ENCODE measurements at regions of chr3 and their contacts with region 1.

Region 1: GRCh38 chr3:156674046-156674910 is at the start of gene TIPARP:
- DNase-seq: peak; percentile 100
- H3K4me3 Mint-ChIP-seq: peak within 1 kb of the TSS; percentile 86
- H3K27ac Mint-ChIP-seq: peak within 1 kb of the TSS; percentile 89
- H3K4me1 Mint-ChIP-seq: peaks cover 40% of the 10 kb centered on the region
- H3K27me3 Mint-ChIP-seq: no peaks in the 10 kb centered on the region
- total RNA-seq, gene TIPARP: 22.1 and 22.8 TPM in 2 replicates

Region 2: GRCh38 chr3:156605686-156606605 is 68.3 kb before region 1 on chr3:
- intact Hi-C with region 1: loop called (anchors 2 kb)
- DNase-seq: no peak
- H3K4me3 Mint-ChIP-seq: peak overlapping the region; percentile 73
- H3K27ac Mint-ChIP-seq: no peak overlapping the region
- H3K4me1 Mint-ChIP-seq: peaks cover 41% of the 10 kb centered on the region
- H3K27me3 Mint-ChIP-seq: peaks cover 7% of the 10 kb centered on the region

Region 3: GRCh38 chr3:156691920-156692319 is 17.6 kb after region 1 on chr3:
- intact Hi-C with region 1: loop called (anchors 2 kb)
- DNase-seq: no peak
- H3K4me3 Mint-ChIP-seq: no peak overlapping the region
- H3K27ac Mint-ChIP-seq: no peak overlapping the region
- H3K4me1 Mint-ChIP-seq: peaks cover 57% of the 10 kb centered on the region
- H3K27me3 Mint-ChIP-seq: no peaks in the 10 kb centered on the region

Region 4: GRCh38 chr3:156742401-156742800 is 68.1 kb after region 1 on chr3:
- intact Hi-C with region 1: no loop called
- DNase-seq: no peak
- H3K4me3 Mint-ChIP-seq: no peak overlapping the region
- H3K27ac Mint-ChIP-seq: no peak overlapping the region
- H3K4me1 Mint-ChIP-seq: peaks cover 3% of the 10 kb centered on the region
- H3K27me3 Mint-ChIP-seq: no peaks in the 10 kb centered on the region

Region 5: GRCh38 chr3:157088601-157089454 is 414.6 kb after region 1 on chr3:
- intact Hi-C with region 1: loop called (anchors 2 kb)
- DNase-seq: peak; percentile 93
- H3K4me3 Mint-ChIP-seq: peak overlapping the region; percentile 76
- H3K27ac Mint-ChIP-seq: peak overlapping the region; percentile 98
- H3K4me1 Mint-ChIP-seq: peaks cover 74% of the 10 kb centered on the region
- H3K27me3 Mint-ChIP-seq: no peaks in the 10 kb centered on the region

Region 6: DNA sequence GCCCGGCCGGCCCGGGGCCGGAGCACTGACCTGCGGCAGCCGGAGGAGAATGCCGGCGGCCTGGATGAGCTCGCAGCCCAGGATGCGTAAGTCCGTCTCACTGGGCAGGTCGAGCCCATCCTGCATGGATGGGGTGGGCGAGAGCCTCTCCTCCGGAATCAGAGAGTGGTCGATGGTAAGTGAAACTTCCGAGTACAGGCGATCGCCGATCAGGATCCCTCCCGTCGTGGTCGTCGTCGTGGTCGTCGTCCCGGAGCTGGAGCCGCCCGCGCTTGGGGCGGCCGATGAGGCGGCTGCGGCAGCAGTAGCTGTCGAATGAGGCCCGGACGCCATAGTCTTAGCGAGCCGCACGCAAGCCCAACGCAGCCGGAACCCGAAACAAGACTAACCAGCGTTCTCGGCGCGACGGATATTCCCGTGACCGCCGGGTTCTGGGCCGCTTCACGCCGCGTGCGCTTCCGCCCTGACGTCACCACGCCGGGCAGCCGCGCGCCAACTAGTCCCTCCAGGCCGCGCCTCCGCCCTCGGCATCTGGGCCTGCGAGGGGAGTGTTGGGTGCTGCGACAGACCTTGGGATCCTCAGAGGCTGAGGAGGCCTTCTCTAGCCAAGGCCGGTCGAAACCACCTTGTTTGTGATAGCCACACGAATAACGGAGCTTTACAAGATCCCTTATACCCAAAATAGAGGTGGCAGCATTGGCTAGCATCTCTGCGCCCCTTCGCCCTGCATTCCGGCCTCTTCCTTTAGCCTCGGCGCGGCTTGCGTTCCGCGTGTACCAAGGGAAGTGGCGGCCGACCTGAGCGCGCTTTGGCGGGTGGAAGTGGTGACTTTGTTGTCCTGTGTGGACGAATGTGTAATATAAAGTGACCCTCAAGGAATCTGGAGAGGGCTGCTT is 485.7 kb after region 1 on chr3 and contains the start of gene CCNL1:
- intact Hi-C with region 1: loop called (anchors 1 kb)
- DNase-seq: peak; percentile 95
- H3K4me3 Mint-ChIP-seq: peak within 1 kb of the TSS; percentile 99
- H3K27ac Mint-ChIP-seq: peak within 1 kb of the TSS; percentile 98
- H3K4me1 Mint-ChIP-seq: peaks cover 52% of the 10 kb centered on the region
- H3K27me3 Mint-ChIP-seq: no peaks in the 10 kb centered on the region
- total RNA-seq, gene CCNL1: 160 and 167 TPM in 2 replicates